ENCODE measurements at regions of chr12 and their contacts with region 1.

Region 1: GRCh38 chr12:49098035-49098451 is 3.4 kb upstream of the DHH start:
- DNase-seq: peak; percentile 49 to 63 (median 58)
- H3K4me3 ChIP-seq: no peak overlapping the region
- H3K4me3 Mint-ChIP-seq: peak overlapping the region in 1 of 8 donors; percentile 15
- H3K27ac ChIP-seq: no peak overlapping the region
- H3K27ac Mint-ChIP-seq: peak overlapping the region in 2 of 7 donors; percentile 15 to 51
- H3K4me1 ChIP-seq: peaks cover 18% of the 10 kb centered on the region
- H3K4me1 Mint-ChIP-seq: peaks cover 11 to 27% (median 16%) of the 10 kb centered on the region in 4 donors
- H3K27me3 ChIP-seq: peaks cover 20% of the 10 kb centered on the region
- H3K27me3 Mint-ChIP-seq: peaks cover 7 to 18% of the 10 kb centered on the region in 2 donors

Region 2: GRCh38 chr12:48750769-48751735 is 347.0 kb before region 1 on chr12:
- CTCF ChIA-PET with region 1: no interaction called
- POLR2A ChIA-PET with region 1: no interaction called
- intact Hi-C with region 1: no loop called
- DNase-seq: no peak
- H3K4me3 ChIP-seq: no peak overlapping the region
- H3K4me3 Mint-ChIP-seq: no peak overlapping the region
- H3K27ac ChIP-seq: no peak overlapping the region
- H3K27ac Mint-ChIP-seq: peak overlapping the region in 2 of 7 donors; percentile 43 to 64
- H3K4me1 ChIP-seq: no peaks in the 10 kb centered on the region
- H3K4me1 Mint-ChIP-seq: peaks cover 0 to 1% (median 0%) of the 10 kb centered on the region in 4 donors
- H3K27me3 ChIP-seq: no peaks in the 10 kb centered on the region
- H3K27me3 Mint-ChIP-seq: peaks cover 0 to 1% of the 10 kb centered on the region in 2 donors

Region 3: GRCh38 chr12:49069507-49070346 is 28.3 kb before region 1 on chr12 and contains the start of gene RHEBL1:
- CTCF ChIA-PET with region 1: interaction called, 221 read pairs
- POLR2A ChIA-PET with region 1: interaction called, 6 read pairs
- intact Hi-C with region 1: loop called (anchors 1 kb)
- DNase-seq: peak; percentile 96 to 98 (median 97)
- H3K4me3 ChIP-seq: peak within 1 kb of the TSS; percentile 69 to 77
- H3K4me3 Mint-ChIP-seq: peak within 1 kb of the TSS; percentile 92 to 99 (median 94)
- H3K27ac ChIP-seq: peak within 1 kb of the TSS; percentile 71
- H3K27ac Mint-ChIP-seq: peak within 1 kb of the TSS; percentile 87 to 98 (median 94)
- H3K4me1 ChIP-seq: peaks cover 13% of the 10 kb centered on the region
- H3K4me1 Mint-ChIP-seq: peaks cover 8 to 18% (median 15%) of the 10 kb centered on the region in 4 donors
- H3K27me3 ChIP-seq: no peaks in the 10 kb centered on the region
- H3K27me3 Mint-ChIP-seq: no peaks in the 10 kb centered on the region
- total RNA-seq, gene RHEBL1: 2.7 to 2.9 TPM

Measured in CD4-positive, alpha-beta memory T cell (primary cell).